Activated CD4-positive, alpha-beta T cell treated with anti-CD3 and anti-CD28 coated beads, Interleukin-2, amount 10 ng/mL, durations not matched to agents 24 days and 14 days (primary cell): ENCODE measurements at regions of chr10 and their contacts with region 1.

Region 1: DNA sequence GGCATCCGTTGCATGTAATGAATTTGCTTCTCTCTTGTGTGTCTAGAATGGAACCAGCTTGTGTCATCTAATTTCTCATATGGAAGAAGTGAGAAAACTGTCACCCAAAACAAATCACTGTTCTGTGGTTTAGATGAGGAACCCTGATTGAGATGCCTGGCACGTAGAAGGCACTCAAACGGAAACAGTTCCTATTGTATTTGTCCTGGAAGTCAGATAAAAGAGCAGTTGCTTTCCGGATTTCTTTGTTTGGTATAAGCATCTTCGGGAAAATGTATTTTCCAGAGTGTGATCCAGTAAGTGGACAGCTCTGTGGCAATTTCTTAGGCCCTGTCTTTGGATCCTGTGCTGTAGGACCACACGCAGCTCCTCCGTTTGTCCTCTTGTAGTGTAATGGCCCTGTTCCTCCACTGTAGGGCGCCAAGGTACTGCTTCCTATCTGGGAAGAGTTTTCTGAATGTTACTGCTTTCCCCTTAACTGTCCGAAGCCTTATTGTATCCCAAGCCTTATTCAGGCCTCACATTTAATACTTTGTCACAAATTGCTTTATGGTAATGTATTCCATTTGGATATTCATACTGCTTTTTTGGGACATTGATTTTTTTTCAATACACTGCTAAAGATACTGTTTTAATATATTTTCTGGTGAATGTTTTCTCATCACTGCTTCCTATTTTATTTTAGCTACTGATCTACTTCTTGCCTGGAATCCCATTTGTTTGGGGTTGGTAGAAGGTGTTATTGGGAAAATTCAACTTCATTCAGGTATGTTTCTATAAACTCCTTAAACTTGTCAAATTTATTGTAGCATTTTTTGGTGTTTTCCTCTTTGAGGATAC is 24.8 kb downstream of the INPP5F start:
- DNase-seq: peak; percentile 87
- H3K4me3 Mint-ChIP-seq: no peak overlapping the region
- H3K27ac Mint-ChIP-seq: no peak overlapping the region
- H3K4me1 Mint-ChIP-seq: peaks cover 2% of the 10 kb centered on the region
- H3K27me3 Mint-ChIP-seq: no peaks in the 10 kb centered on the region

Region 2: GRCh38 chr10:119859420-119860258 is 109.0 kb after region 1 on chr10:
- intact Hi-C with region 1: loop called (anchors 1 kb)
- DNase-seq: peak; percentile 59
- H3K4me3 Mint-ChIP-seq: no peak overlapping the region
- H3K27ac Mint-ChIP-seq: peak overlapping the region; percentile 4
- H3K4me1 Mint-ChIP-seq: peaks cover 28% of the 10 kb centered on the region
- H3K27me3 Mint-ChIP-seq: no peaks in the 10 kb centered on the region

Region 3: GRCh38 chr10:119919826-119920225 is 169.2 kb after region 1 on chr10:
- intact Hi-C with region 1: loop called (anchors 5 kb)
- DNase-seq: no peak
- H3K4me3 Mint-ChIP-seq: peak overlapping the region; percentile 37
- H3K27ac Mint-ChIP-seq: peak overlapping the region; percentile 51
- H3K4me1 Mint-ChIP-seq: peaks cover 16% of the 10 kb centered on the region
- H3K27me3 Mint-ChIP-seq: no peaks in the 10 kb centered on the region